Ascending aorta (tissue), 2 donors: ENCODE measurements at regions of chr1 and their contacts with region 1.

Region 1: GRCh38 chr1:193121616-193122593 is at the start of gene CDC73:
- DNase-seq: peak; percentile 91 to 99
- H3K4me3 ChIP-seq: peak within 1 kb of the TSS; percentile 70 to 78
- H3K27ac ChIP-seq: peak within 1 kb of the TSS; percentile 95
- H3K4me1 ChIP-seq: peaks cover 5 to 15% of the 10 kb centered on the region in 2 donors
- H3K27me3 ChIP-seq: no peaks in the 10 kb centered on the region
- CTCF ChIP-seq: peak; percentile 89 to 99 (median 93)
- total RNA-seq, gene CDC73: 26.5 TPM

Region 2: DNA sequence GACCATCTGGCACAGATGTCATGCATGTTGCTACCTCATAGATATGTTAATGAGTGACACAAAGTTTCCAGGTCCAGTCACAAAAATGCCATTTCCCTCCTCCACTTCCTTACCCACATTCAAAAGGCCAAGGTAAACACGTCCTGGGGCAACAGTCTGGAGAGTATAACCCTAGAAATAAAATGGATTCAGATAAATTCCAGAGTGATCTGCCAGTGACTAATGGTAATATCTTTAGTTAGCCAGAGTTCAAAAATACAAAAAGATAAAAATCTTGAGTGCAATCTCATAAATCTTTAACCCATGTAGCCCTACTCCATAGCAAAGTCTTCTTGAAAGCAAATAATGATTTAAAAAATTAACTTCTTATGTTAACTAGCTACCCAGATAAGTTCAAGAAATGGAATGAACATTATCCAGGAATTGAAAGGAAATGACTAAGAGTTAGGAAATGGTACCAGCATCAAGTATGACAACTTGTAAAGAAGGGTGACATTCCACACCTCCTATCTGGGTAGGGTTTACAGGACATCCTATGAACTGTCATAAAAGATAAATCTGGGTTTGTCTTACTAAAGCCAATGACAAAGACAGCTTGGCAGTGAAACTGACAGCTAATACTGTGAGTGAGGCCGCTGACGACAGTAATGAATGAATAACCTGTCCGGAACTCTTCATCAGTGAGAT is 295.0 kb before region 1 on chr1:
- intact Hi-C with region 1: loop called (anchors 5 kb)
- DNase-seq: peak in 1 of 2 donors; percentile 70
- H3K4me3 ChIP-seq: no peak overlapping the region
- H3K27ac ChIP-seq: peak overlapping the region; percentile 41 to 59
- H3K4me1 ChIP-seq: peaks cover 0 to 11% of the 10 kb centered on the region in 2 donors
- H3K27me3 ChIP-seq: no peaks in the 10 kb centered on the region
- CTCF ChIP-seq: no peak

Region 3: GRCh38 chr1:193042766-193043691 is 78.9 kb before region 1 on chr1:
- intact Hi-C with region 1: no loop called
- DNase-seq: no peak
- H3K4me3 ChIP-seq: no peak overlapping the region
- H3K27ac ChIP-seq: no peak overlapping the region
- H3K4me1 ChIP-seq: no peaks in the 10 kb centered on the region
- H3K27me3 ChIP-seq: no peaks in the 10 kb centered on the region
- CTCF ChIP-seq: no peak

Region 4: DNA sequence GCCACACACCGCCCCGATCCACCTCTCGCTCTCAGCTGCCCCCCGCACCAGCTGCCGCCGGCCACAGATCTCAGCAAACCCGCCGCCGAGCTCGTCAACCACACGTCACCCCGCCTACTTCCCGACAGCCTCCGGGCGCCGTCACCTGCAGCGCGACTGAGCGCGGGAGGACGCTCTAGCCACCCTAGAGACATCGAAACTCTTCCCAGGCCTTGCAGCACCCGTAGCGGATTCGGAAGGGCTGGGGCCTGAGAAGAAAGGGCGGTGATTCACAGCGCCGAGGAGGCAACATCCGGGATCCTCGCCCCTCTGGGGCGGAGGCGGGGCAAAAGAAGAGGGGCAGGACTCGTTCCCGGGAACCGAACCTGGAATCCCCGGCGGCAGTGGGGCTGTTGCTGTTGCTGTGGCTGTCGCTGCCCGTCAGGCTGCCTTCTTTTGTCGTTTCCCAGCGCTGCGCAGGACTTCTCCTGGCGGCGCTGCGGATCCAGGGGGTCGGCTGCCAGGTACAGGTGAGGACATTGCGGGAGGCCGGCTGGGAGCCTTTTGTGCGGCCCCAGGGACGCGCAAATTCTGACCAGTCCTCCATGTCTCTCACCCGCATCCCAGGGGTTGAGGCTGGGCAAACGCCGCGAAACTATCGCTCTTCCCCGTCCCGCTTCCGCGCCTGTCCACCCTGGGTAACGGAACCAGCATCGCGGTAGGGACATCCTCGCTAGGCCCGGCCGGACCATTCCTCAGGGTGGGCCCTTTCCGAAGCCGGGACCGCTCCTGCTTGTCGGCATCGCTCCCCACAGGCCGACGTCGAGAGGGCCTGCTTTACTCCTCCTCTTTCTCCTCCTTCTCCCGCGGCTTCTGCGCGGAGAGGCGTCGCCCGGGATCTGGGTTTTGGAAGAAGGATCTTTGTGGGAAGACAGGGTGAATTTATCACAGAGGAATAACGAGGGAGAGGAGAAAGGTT is 62.4 kb before region 1 on chr1 and contains the starts of genes RO60 and UCHL5:
- intact Hi-C with region 1: loop called (anchors 1 kb)
- DNase-seq: peak; percentile 95 to 98
- H3K4me3 ChIP-seq: peak within 1 kb of the TSS; percentile 77 to 83
- H3K27ac ChIP-seq: peak within 1 kb of the TSS; percentile 96
- H3K4me1 ChIP-seq: peaks cover 3 to 26% of the 10 kb centered on the region in 2 donors
- H3K27me3 ChIP-seq: no peaks in the 10 kb centered on the region
- CTCF ChIP-seq: no peak
- total RNA-seq, gene RO60: 56.2 TPM
- total RNA-seq, gene UCHL5: 4.2 TPM

Region 5: DNA sequence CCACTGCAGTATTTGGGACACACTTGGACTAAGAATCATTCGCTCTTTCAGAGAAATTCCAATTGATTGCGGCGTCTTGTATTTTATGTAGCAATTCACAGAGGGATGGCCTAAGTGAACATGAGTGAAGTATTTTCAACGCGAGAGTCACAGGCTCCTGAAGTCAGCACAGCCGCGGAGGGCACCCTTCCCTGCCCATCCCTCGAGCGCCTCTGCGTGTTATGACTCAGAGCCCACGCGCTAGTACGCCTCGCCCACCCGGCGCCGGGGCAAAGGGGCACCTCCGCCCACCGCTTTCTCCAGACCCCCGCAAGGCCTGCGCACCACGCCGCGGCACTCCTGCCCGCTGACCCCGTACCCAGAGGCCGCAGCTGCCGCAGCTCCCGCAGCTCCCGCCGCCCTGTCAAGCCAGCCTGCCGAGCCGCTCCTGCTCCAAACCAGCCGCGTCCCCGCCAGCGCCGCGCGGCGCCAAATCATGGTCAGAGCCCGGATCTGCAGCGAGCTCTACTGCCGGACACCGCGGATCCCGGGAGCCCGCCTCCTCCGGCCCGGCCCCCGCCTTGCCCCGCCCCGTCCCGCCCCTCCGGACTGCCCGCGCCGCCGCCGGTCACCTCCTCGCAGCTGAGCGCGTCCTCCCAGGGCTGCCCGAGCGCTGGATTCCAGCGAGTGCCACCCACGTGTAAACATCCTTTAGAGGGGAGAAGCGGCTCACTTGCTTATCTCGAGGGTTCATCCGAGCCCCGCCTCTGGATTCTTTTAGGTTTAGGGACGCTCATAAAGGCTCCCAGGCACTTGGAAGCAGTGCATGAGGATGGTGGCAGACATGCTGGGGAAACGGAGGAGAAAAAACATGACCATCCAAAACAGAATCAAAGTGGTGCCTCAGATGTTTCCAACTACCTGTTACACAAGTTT is 16.7 kb before region 1 on chr1 and contains the start of gene GLRX2:
- intact Hi-C with region 1: loop called (anchors 1 kb)
- DNase-seq: peak; percentile 39 to 92
- H3K4me3 ChIP-seq: peak within 1 kb of the TSS; percentile 93 to 98
- H3K27ac ChIP-seq: peak within 1 kb of the TSS; percentile 94 to 97
- H3K4me1 ChIP-seq: peaks cover 2 to 19% of the 10 kb centered on the region in 2 donors
- H3K27me3 ChIP-seq: no peaks in the 10 kb centered on the region
- CTCF ChIP-seq: no peak
- total RNA-seq, gene GLRX2: 2.8 TPM